GM12878 (cell line): ENCODE measurements at regions of chr3 and their contacts with region 1.

Region 1: DNA sequence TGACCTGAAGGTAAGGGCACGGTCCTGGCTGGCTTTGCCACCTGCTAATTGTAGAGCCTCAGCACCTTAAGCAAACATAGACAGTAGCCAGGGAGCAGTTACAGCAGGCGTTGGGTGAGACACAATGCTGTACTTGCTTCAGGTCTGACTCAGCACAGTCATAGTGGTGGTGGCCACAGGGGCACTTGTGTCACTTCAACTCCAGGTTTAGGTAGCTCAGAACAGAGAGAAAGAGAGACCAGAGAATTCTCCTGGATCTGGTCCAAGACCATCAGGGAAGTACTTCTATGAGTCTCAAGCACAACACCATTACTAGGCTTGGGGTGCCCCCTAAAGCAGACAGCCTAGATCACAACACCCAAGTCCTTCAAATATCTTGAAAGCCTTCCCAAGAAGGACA is 204.4 kb downstream of the OTOL1 start:
- DNase-seq: peak; percentile 7
- ATAC-seq: peak; percentile 98
- H3K4me3 ChIP-seq: no peak overlapping the region
- H3K27ac ChIP-seq: no peak overlapping the region
- H3K4me1 ChIP-seq: no peaks in the 10 kb centered on the region
- H3K27me3 ChIP-seq: no peaks in the 10 kb centered on the region
- CTCF ChIP-seq: peak in 1 of 3 experiments; percentile 33; a peak in 1 of 6 replicates
- EP300 ChIP-seq: no peak
- POLR2A ChIP-seq: no peak
- RAD21 ChIP-seq: peak; percentile 25; the same call in 1 of the 2 replicates

Region 2: DNA sequence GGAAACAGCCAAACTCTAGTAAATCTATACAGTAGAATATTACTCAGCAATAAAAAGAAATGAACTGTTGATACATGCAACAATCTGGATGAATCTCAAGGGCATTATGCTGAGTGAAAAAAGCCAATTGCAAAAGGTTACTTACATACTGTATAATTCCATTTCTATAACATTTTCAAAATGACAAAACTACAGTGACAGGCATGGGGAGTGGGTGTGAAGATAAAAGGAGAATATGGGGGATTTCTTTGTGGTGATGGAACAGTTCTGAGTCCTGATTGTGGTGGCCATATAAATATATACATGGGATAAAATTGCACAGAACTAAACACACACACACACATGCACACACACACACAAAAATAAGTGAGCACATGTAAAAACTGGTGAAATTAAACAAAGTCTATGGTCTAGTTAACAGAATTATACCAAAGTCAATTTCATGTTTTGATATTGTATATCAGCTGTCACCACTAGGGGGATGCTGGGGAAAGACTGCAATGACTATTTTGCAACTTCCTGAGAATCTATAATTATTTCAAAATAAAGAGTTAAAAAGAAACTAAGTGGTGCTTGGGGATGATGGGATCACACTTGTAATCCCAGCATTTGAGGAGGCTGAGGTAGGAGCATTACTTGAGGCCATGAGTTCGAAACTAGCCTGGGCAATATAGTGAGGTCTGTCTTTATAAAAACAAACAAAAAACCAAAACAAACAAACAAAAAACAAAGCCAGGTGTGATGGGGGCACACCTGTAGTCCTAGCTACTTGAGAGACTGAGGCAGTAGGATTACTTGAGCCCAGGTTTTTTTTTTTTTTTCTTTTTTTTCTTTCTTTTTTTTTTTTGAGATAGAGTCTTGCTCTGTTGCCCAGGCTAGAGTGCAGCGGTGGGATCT is 395.7 kb before region 1 on chr3:
- CTCF ChIA-PET with region 1: no interaction called
- POLR2A ChIA-PET with region 1: no interaction called
- RAD21 ChIA-PET with region 1: no interaction called
- SMC1A ChIA-PET with region 1: no interaction called
- in situ Hi-C with region 1: no loop called
- intact Hi-C with region 1: no loop called
- DNase-seq: no peak
- ATAC-seq: peak; percentile 51
- H3K4me3 ChIP-seq: no peak overlapping the region
- H3K27ac ChIP-seq: no peak overlapping the region
- H3K4me1 ChIP-seq: no peaks in the 10 kb centered on the region
- H3K27me3 ChIP-seq: no peaks in the 10 kb centered on the region
- CTCF ChIP-seq: peak; percentile 38 to 71 (median 52)
- EP300 ChIP-seq: no peak
- POLR2A ChIP-seq: no peak
- RAD21 ChIP-seq: peak; percentile 22; the same call in 1 of the 2 replicates

Region 3: GRCh38 chr3:161508863-161509477 is 192.0 kb before region 1 on chr3:
- CTCF ChIA-PET with region 1: interaction called, 3 read pairs
- POLR2A ChIA-PET with region 1: no interaction called
- RAD21 ChIA-PET with region 1: no interaction called
- SMC1A ChIA-PET with region 1: interaction called, 6 read pairs
- in situ Hi-C with region 1: no loop called
- intact Hi-C with region 1: loop called (anchors 2 kb)
- DNase-seq: no peak
- ATAC-seq: peak; percentile 89
- H3K4me3 ChIP-seq: no peak overlapping the region
- H3K27ac ChIP-seq: no peak overlapping the region
- H3K4me1 ChIP-seq: no peaks in the 10 kb centered on the region
- H3K27me3 ChIP-seq: no peaks in the 10 kb centered on the region
- CTCF ChIP-seq: peak; percentile 27 to 52 (median 33); a peak in 4 of 6 replicates
- EP300 ChIP-seq: no peak
- POLR2A ChIP-seq: no peak
- RAD21 ChIP-seq: peak; percentile 42

Region 4: DNA sequence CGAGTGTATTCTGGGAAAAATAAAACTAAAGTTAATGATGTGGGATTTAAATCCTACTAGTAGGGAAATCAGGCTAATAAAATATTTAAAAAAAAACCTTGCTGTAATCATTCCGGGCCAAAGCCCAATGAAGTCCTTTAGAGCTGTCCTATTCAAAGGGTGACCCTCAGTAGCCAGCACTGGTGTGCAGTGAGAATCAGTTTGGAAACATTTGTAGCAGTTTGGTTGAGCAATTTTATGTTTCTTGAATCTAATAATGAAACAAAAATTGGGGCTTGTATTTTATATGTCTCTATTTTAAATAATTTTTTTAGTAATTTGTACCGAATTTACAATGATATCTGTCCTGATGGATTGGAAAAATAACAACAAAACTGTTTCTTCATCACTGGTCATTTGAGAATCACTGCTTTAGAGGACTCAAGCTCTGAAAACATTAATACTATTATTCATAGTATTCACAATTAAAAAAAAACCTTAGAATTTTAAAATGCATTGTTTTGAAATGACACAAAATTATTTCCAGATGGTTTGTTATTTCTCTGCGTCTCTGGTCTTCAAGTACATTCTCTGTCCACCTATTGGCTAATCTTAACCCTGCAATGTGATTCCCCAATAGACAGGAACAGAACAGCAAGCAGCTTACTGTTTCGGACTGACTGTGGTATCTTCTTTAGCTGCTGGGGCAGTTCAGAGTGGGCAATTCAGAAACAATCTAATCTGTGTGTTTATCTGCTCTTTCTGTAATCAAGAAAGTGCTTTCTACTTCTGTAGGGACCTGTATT is 133.2 kb before region 1 on chr3:
- CTCF ChIA-PET with region 1: interaction called, 11 read pairs
- POLR2A ChIA-PET with region 1: no interaction called
- RAD21 ChIA-PET with region 1: interaction called, 13 read pairs
- SMC1A ChIA-PET with region 1: interaction called, 17 read pairs
- in situ Hi-C with region 1: no loop called
- intact Hi-C with region 1: loop called (anchors 2 kb)
- DNase-seq: no peak
- ATAC-seq: peak; percentile 88
- H3K4me3 ChIP-seq: no peak overlapping the region
- H3K27ac ChIP-seq: no peak overlapping the region
- H3K4me1 ChIP-seq: no peaks in the 10 kb centered on the region
- H3K27me3 ChIP-seq: no peaks in the 10 kb centered on the region
- CTCF ChIP-seq: no peak
- EP300 ChIP-seq: no peak
- POLR2A ChIP-seq: no peak
- RAD21 ChIP-seq: no peak